ENCODE measurements at regions of chr11 and their contacts with region 1.

Region 1: DNA sequence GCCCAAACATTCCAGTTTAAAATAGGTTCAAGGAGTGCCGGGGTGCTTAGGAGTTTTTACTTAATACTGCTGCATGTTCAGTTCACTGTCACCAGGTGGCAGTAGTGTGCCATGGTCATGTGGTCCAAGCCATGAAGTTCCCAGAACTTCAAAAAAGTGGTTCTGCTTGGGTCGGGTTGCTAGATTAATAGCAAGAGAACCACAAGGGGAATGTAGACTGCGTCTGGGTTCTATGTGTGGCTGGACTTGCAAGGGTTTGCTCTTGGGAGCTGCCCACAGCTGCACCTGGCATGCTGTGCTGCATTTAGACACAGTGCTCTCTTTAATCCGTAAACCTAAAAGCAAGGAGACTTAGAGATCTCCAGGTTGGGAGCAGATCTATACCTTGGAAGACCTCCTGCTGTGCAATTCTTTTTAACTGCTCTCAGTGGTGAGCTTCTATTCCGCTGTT is 6.5 kb upstream of the SPON1 start:
- DNase-seq: peak; percentile 33
- CTCF ChIP-seq: peak; percentile 73

Region 2: GRCh38 chr11:13944911-13945425 is 11.0 kb before region 1 on chr11:
- CTCF ChIA-PET with region 1: interaction called, 24 read pairs
- POLR2A ChIA-PET with region 1: no interaction called
- DNase-seq: no peak
- CTCF ChIP-seq: no peak

Region 3: DNA sequence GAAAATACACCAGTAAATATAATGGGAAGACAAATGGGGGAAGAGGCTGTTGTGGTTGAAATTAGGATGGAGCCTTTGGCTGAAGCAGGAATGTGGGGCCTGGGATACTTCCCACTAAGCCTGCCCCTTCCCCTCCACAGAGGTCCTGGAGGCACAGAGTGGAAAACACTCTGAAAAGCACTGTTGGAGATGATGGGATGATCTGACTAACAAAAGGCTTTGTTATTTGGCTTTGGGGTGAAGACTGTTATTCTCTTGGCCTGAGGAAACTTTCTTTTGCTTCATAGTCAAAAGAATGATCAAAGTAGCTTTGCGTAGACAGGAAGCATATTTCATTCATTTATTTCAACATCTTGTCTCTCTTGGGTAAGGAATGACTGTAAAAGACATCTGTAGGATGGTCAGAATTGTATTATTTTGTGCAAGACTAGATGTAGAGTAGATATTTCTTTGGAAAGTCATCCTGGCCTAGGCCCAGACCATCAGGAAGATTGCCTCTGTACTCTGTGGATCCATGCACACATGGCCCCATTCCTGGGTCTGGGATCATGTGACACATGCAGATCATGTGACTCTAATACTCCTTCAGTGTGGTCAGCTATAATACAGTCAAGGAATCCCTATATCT is 118.0 kb after region 1 on chr11:
- CTCF ChIA-PET with region 1: no interaction called
- POLR2A ChIA-PET with region 1: no interaction called
- DNase-seq: no peak
- CTCF ChIP-seq: no peak

Region 4: DNA sequence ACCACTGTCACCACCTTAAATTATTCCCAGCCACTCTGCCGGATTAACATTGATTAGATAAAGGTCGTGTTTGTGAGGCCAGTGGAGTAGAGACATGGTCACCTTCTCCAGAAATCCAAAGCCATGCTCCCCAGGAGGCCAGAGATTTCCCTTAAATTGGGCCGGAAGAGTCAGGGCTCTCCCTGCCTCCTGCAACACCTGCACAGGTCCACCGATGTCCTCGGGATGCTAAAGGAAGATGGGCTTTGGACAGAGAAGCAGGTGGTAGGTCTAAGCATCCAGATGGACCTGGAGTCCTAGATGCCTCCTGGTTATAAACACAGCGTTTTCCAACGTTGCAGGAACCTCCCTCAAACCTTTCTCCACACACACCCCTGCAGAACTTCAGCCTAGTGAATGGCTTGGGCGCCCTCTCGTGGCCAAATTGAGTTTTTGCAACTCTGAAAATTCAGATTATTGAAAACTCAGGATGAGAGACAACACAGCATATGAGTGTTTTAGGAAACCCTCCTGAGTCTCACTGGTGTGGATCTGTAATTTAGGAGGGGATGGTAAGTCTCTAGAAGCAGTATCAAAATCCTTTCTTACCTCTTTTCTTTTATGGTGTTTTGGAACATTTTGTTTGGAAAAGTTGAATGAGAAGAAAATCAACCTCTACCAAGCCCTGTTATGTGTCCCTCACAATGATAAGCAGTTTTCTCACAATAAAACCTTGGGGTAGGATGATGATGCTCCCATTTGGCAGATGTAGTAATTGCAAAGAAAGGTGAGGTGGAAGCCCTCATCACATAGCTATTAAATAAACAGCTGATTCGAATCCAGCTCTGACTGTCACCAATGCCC is 293.3 kb after region 1 on chr11:
- CTCF ChIA-PET with region 1: interaction called, 71 read pairs
- POLR2A ChIA-PET with region 1: no interaction called
- DNase-seq: peak; percentile 56
- CTCF ChIP-seq: peak; percentile 88